ENCODE measurements at regions of chr20 and their contacts with region 1.

Region 1: DNA sequence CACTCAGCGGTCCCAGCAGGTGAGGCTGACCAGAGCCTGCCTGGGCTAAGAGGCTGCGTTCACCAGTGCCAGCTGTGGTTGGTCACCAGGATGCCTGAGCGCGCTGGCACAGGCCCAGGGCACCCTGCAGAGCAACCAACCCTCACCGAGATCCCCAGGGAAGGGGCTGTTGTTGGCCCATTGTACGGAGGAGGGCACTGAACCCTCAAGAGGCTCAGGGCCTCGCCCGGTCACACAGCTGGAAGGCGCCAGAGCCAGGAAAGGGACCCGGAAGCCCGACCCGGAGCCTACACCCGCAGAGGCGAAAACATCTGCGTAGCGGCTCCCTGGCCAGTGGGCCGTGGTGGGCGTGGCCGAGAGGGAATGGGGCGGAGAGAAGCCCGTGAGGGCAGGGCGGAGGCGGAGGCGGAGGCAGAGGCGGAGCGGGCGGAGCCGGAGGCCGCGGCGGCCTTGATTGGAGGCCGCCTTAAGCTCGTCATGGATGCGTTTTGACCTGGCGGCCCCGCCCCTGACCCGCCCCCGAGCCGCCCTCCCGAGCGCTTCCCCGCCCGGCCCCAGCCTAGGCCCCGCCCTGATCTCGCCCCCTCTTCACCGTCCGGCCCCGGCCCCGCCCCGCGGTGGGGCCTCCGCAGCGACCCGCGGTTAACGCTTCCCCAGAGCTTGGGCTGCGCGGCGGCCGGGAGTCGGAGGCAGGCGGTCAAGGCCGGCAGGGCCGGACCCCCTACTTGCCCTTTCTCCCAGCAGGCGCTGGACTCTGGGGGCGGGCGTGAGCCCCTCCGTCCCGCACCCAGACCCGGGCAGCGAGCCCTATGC is 2.2 kb upstream of the MRGBP start:
- DNase-seq: peak; percentile 97
- ATAC-seq: peak; percentile 76
- H3K4me3 ChIP-seq: peak overlapping the region; percentile 72
- H3K27ac ChIP-seq: peak overlapping the region; percentile 61
- H3K4me1 ChIP-seq: peaks cover 39% of the 10 kb centered on the region
- H3K27me3 ChIP-seq: no peaks in the 10 kb centered on the region
- CTCF ChIP-seq: no peak

Region 2: GRCh38 chr20:62500237-62500864 is 293.8 kb before region 1 on chr20:
- CTCF ChIA-PET with region 1: interaction called, 3 read pairs
- POLR2A ChIA-PET with region 1: no interaction called
- intact Hi-C with region 1: loop called (anchors 1 kb)
- DNase-seq: peak; percentile 73
- ATAC-seq: peak; percentile 81
- H3K4me3 ChIP-seq: no peak overlapping the region
- H3K27ac ChIP-seq: no peak overlapping the region
- H3K4me1 ChIP-seq: peaks cover 16% of the 10 kb centered on the region; the same call in 1 of the 2 replicates
- H3K27me3 ChIP-seq: no peaks in the 10 kb centered on the region
- CTCF ChIP-seq: peak; percentile 89

Region 3: GRCh38 chr20:62652051-62652926 is 141.8 kb before region 1 on chr20:
- CTCF ChIA-PET with region 1: no interaction called
- POLR2A ChIA-PET with region 1: interaction called, 11 read pairs
- intact Hi-C with region 1: loop called (anchors 5 kb)
- DNase-seq: peak; percentile 84
- ATAC-seq: peak; percentile 60
- H3K4me3 ChIP-seq: peak overlapping the region; percentile 54
- H3K27ac ChIP-seq: peak overlapping the region; percentile 84
- H3K4me1 ChIP-seq: peaks cover 34% of the 10 kb centered on the region
- H3K27me3 ChIP-seq: no peaks in the 10 kb centered on the region
- CTCF ChIP-seq: no peak; the same call in 1 of the 2 replicates

Region 4: DNA sequence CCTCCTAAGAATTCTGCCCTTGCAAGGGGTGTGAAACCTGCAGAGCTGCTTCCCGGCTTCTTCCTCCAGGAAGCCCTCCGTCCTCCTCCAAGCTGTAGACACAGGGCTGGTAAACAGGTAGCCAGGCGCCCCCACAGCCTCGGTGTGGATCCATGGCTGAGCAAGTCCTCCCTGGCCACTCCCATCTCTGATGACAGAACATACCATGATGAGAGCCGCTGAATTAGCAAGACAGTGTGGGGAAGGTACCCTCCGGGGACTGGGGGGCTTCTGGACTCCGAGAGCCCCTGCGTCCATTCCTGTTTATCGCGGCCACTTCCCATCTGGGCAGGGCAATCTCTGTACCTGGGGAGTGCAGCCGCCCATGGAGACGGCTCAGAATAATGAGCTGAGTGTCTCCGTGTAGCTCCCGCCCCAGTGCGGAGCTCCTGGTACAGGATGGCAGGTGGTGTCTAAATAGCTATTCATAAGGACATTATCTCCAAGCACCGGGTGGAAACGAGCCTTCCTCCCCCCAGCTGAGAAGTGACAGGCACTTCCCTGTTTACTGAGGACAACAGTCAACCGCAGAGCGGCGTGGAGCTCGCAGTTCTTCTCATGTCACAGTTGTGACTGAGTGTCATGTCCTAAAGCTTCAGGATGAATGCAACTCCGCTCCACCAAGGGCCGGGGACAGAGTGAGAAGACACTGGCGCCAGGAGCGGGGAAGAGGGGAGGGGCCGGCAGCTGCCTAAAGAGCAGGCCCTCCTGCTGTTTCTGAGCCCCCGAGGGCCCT is 108.2 kb before region 1 on chr20:
- CTCF ChIA-PET with region 1: interaction called, 9 read pairs
- POLR2A ChIA-PET with region 1: no interaction called
- intact Hi-C with region 1: loop called (anchors 5 kb)
- DNase-seq: peak; percentile 49
- ATAC-seq: peak; percentile 68
- H3K4me3 ChIP-seq: peak overlapping the region; percentile 49; the same call in 1 of the 2 replicates
- H3K27ac ChIP-seq: no peak overlapping the region
- H3K4me1 ChIP-seq: peaks cover 13% of the 10 kb centered on the region
- H3K27me3 ChIP-seq: no peaks in the 10 kb centered on the region
- CTCF ChIP-seq: no peak

Region 5: GRCh38 chr20:62740286-62741141 is 53.6 kb before region 1 on chr20:
- CTCF ChIA-PET with region 1: no interaction called
- POLR2A ChIA-PET with region 1: no interaction called
- intact Hi-C with region 1: loop called (anchors 5 kb)
- DNase-seq: peak; percentile 98
- ATAC-seq: peak; percentile 74
- H3K4me3 ChIP-seq: peak overlapping the region; percentile 61; the same call in 1 of the 2 replicates
- H3K27ac ChIP-seq: peak overlapping the region; percentile 98
- H3K4me1 ChIP-seq: peaks cover 30% of the 10 kb centered on the region
- H3K27me3 ChIP-seq: no peaks in the 10 kb centered on the region
- CTCF ChIP-seq: peak; percentile 30; the same call in 1 of the 2 replicates

Measured in PC-3 (cell line).